AG04450 (cell line): ENCODE measurements at regions of chr2 and their contacts with region 1.

Region 1: DNA sequence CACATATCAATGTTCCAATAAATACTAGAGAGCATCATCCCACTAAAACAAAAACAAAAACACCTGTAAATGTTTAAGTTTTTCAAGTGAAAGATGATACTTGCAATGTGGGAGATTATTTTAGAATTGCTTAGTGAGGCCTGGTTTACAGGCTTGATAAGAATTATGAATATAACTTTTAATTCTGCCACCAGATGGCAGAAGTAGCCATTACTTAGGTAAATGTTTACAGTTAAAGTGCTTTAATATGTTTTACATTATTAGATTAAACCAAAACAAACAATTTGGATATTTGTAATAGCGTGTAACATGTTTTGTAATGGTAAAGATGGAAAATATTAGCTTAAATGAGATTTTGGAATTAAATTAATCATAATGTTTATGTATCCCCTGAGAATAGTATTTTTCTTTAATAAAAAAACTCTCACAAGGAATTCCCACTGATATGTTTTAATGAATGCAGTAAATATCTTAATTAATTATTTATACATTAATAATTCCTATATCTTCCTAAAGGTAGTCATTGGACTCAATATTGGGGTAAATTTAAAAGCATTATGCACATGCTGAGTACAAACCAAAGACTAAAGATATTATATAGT is 522.0 kb downstream of the SPAG16 start:
- DNase-seq: no peak
- H3K4me3 ChIP-seq: no peak overlapping the region
- H3K27ac ChIP-seq: no peak overlapping the region
- H3K27me3 ChIP-seq: no peaks in the 10 kb centered on the region
- CTCF ChIP-seq: peak; percentile 47

Region 2: DNA sequence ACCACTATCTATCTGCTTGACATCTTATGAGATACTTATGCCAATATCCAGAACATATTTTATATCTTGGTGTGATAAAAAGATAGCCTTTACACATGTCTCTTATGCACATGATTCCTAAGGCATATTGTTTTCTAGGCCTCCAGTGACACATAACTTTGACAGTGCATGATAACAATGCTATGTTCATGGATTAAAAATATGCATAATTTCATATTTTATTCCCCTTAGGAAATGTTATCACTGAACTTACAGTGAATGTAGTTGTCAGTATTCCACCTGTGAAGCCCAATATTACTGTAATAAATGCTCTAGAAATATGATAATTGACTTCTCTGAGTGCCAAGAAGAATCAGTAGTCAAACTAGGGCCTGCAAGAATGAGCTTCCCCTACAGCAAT is 10.4 kb after region 1 on chr2:
- CTCF ChIA-PET with region 1: interaction called, 16 read pairs
- POLR2A ChIA-PET with region 1: no interaction called
- DNase-seq: no peak
- H3K4me3 ChIP-seq: no peak overlapping the region
- H3K27ac ChIP-seq: no peak overlapping the region
- H3K27me3 ChIP-seq: no peaks in the 10 kb centered on the region
- CTCF ChIP-seq: no peak